Activated T-helper 2 cell treated with anti-CD3 and anti-CD28 coated beads, Interferon-gamma antibody, Interleukin-2, Interleukin-4, amounts not matched to agents 10 μg/mL and 5 μg/mL and 100 μg/mL, durations not matched to agents 14 hours and 24 hours and 36 hours (primary cell): ENCODE measurements at regions of chr3 and their contacts with region 1.

Region 1: GRCh38 chr3:58532794-58533220 is 4.2 kb downstream of the ACOX2 start:
- DNase-seq: peak; percentile 72
- H3K4me3 Mint-ChIP-seq: no peak overlapping the region
- H3K27ac Mint-ChIP-seq: no peak overlapping the region
- H3K4me1 Mint-ChIP-seq: peaks cover 19% of the 10 kb centered on the region
- H3K27me3 Mint-ChIP-seq: peaks cover 3% of the 10 kb centered on the region

Region 2: DNA sequence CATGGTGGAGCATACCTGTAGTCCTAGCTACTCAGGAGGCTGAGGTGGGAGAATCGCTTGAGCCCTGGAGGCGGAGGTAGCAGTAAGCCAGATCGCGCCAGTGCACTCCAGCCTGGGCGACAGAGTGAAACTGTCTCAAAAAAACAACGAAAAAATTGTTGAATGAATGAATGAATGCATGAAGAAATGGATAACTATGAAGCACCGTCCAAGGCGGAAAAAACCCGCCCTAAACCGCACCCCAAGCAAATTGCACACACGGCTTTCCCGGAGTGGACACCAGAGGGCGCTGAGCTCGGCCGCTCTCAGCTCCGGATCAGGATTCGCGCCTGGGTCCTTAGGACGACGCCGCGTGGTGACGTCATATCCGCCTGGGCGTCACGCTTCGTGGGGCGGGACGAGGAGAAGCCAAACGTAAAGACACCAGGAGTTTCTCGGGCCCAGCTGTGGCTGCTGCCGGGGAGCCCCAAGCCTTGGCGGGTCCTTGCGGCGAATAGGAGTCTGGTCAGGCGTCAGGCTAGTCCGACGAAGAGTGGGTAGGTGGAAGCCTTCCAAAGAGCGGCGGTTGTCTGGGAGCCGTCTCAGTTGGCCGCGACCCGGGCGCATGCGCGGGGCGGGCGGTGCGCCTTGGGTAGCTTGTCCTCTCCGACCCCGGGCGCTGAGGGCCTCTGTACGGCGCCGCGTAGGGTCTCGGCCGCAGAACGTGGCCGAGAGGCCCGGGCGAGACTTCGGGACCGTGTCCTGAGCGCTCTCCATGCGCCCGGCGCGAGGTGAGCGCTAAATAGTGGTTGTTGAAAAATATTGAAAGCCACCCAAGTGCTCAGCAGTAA is 226.7 kb before region 1 on chr3 and contains the starts of genes HTD2 and RPP14:
- intact Hi-C with region 1: loop called (anchors 1 kb)
- DNase-seq: peak; percentile 97
- H3K4me3 Mint-ChIP-seq: peak within 1 kb of the TSS; percentile 91
- H3K27ac Mint-ChIP-seq: peak within 1 kb of the TSS; percentile 100
- H3K4me1 Mint-ChIP-seq: peaks cover 23% of the 10 kb centered on the region
- H3K27me3 Mint-ChIP-seq: no peaks in the 10 kb centered on the region
- total RNA-seq, gene HTD2: 10.1 and 10.5 TPM in 2 replicates
- total RNA-seq, gene RPP14: 21.8 and 23.8 TPM in 2 replicates

Region 3: GRCh38 chr3:58433400-58434169 is 99.2 kb before region 1 on chr3 and contains the start of gene PDHB:
- intact Hi-C with region 1: loop called (anchors 1 kb)
- DNase-seq: peak; percentile 87
- H3K4me3 Mint-ChIP-seq: peak within 1 kb of the TSS; percentile 90
- H3K27ac Mint-ChIP-seq: peak within 1 kb of the TSS; percentile 90
- H3K4me1 Mint-ChIP-seq: peaks cover 36% of the 10 kb centered on the region
- H3K27me3 Mint-ChIP-seq: peaks cover 5% of the 10 kb centered on the region
- total RNA-seq, gene PDHB: 79.3 and 82.7 TPM in 2 replicates

Region 4: DNA sequence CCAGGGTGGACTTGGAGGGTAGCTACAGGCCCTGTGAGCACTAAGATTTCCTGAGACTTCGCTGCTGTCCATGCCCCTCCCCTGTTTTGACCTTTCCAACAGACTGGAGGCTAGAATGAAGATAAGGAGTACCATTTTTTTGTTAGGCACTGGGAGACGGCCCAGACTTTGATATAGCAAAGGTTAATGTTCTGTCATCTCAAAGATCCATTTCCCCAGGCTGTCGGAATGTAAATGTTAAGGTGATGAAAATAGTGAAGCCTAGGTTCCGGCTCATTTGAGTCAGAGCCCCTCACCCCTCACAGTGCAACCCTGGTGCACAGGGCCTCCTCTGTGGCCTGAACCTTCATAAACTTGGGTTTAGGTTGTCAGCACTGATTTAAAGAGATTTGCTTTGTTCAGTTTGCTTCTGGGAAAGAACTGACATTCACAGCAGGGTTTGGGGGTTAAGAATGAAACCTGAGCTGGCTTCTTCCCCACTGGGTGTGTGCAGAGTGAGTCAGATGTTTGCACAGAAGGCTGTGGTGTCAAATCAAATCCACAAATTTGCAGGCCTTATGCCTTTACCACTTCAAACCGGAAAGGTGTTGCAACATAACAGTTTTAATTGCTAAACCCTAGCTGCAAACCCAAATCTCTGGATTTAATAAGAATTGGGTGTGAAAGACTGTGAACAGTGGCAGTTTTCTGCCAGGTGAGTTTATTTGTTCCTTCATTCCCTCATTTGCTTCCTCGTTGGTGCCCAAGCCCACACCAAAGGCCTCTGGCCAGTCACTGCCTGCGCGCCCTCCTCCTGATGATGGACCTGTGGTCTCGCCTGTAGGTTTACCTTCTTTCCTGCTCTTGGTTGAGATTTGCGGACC is 61.6 kb before region 1 on chr3:
- intact Hi-C with region 1: loop called (anchors 2 kb)
- DNase-seq: peak; percentile 62
- H3K4me3 Mint-ChIP-seq: no peak overlapping the region
- H3K27ac Mint-ChIP-seq: peak overlapping the region; percentile 76
- H3K4me1 Mint-ChIP-seq: peaks cover 48% of the 10 kb centered on the region
- H3K27me3 Mint-ChIP-seq: no peaks in the 10 kb centered on the region

Region 5: DNA sequence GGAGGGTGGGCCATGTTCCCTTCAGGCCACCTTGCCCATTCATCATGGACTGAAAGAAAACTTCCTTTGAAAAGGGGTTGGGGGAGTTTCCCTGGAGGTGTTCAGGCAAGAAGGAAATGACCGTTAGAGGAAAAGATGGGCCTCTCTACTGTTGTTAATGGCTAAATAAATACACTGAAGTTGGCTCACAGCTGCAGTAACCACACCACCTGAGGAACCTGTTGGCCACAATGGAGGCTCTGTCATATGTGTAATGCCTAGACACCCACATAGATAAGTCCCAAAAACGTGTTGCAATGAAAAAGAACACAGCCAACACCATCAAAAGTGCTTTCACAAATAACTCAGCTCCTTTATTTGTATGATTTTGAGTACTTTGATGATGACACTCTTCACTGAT is 171.9 kb after region 1 on chr3:
- intact Hi-C with region 1: no loop called
- DNase-seq: no peak
- H3K4me3 Mint-ChIP-seq: no peak overlapping the region
- H3K27ac Mint-ChIP-seq: no peak overlapping the region
- H3K4me1 Mint-ChIP-seq: peaks cover 3% of the 10 kb centered on the region
- H3K27me3 Mint-ChIP-seq: peaks cover 11% of the 10 kb centered on the region

Region 6: DNA sequence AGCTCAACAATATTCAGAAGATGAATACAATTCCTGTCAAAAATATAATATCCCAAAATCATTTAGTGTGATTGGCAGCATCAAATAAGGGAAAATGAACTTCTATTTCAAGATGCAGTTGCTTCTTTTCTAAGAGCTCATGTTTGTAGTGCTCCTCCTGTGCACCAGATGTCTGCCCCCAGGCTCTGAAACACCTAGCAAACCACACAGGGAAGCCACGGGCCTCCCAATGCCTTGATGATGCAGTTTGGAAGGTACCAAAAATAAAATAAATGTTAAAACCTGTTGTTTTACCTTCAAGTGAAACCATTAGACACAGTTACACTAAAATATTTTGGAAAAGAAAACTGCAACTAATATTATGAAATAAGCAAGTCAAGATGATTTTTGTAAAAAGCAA is 494.8 kb after region 1 on chr3:
- intact Hi-C with region 1: no loop called
- DNase-seq: no peak
- H3K4me3 Mint-ChIP-seq: no peak overlapping the region
- H3K27ac Mint-ChIP-seq: no peak overlapping the region
- H3K4me1 Mint-ChIP-seq: no peaks in the 10 kb centered on the region
- H3K27me3 Mint-ChIP-seq: peaks cover 20% of the 10 kb centered on the region